AG04450 (cell line): ENCODE measurements at regions of chr7 and their contacts with region 1.

Region 1: DNA sequence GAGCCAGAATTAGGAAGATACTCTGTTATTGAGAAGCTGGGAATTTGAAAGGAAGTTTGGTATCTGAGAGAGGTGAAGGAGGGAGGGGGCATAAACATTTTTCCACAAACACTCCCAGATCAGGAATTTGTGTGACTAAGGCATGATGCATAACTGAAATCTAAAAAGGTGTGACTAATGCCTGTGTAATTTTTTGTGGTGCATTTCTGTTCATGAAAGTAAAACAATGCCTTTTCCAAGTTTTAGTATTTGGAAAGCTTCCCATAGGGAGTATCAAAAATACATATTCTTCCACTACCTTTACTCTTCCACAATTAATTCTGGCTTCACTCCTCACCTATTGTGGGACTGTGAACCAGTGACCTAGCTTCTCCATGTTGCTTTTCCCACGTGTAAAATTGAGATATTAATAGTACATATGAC is 56.4 kb upstream of the CAV2 start:
- DNase-seq: peak; percentile 82
- H3K4me3 ChIP-seq: no peak overlapping the region
- H3K27ac ChIP-seq: peak overlapping the region; percentile 55
- H3K27me3 ChIP-seq: no peaks in the 10 kb centered on the region
- CTCF ChIP-seq: no peak

Region 2: GRCh38 chr7:116501425-116502167 is 58.5 kb after region 1 on chr7:
- CTCF ChIA-PET with region 1: interaction called, 4 read pairs
- POLR2A ChIA-PET with region 1: interaction called, 11 read pairs
- DNase-seq: no peak
- H3K4me3 ChIP-seq: peak overlapping the region; percentile 89
- H3K27ac ChIP-seq: no peak overlapping the region
- H3K27me3 ChIP-seq: no peaks in the 10 kb centered on the region
- CTCF ChIP-seq: no peak